ENCODE measurements at regions of chr7 and their contacts with region 1.

Region 1: DNA sequence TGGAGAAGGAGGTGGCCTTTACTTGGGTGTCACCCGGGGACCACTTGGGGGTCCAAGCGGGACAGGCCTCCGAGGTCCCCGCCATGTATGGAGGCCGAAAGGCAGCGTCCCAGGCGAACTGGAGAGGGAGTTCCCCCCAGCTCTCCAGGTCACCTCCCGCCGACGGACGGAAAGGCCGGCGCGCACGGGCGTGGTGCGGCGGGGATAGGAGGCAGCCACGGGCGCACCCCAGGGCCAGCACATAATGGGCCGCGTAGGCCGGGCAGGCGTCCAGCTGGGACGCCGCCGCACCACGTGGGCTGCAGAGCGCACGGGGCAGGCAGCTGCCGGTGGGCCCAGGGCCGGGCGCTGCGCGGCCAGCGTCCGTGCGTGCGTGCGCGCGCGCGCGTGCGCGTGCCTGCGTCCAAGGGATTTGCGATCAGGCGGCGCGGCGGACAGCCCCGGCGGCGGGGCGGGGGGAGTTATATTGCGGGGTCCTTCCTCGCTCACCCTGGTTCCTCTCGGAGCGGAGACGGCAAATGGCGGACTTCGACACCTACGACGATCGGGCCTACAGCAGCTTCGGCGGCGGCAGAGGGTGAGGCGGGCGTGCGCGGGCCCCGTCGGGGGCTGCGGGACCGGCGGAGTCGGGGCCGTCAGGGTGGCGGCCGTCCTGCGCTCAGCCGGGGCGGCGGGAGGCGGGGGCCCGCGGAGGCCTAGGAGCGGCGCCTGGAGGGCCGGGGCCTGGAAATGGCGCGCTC is at the start of gene EIF4H:
- DNase-seq: peak; percentile 96 to 99 (median 98)
- ATAC-seq: peak; percentile 97 to 98 (median 98)
- H3K4me3 ChIP-seq: peak within 1 kb of the TSS; percentile 82 to 99 (median 96)
- H3K27ac ChIP-seq: peak within 1 kb of the TSS; percentile 90 to 98 (median 96)
- H3K4me1 ChIP-seq: peaks cover 4 to 57% (median 42%) of the 10 kb centered on the region in 12 donors
- H3K27me3 ChIP-seq: no peaks in the 10 kb centered on the region
- CTCF ChIP-seq: peak in 1 of 12 donors; percentile 7
- POLR2A ChIP-seq: peak; percentile 27 to 69
- total RNA-seq, gene EIF4H: 166 to 216 (median 196) TPM

Region 2: GRCh38 chr7:74083117-74083876 is 90.7 kb before region 1 on chr7 and contains the start of gene LIMK1:
- intact Hi-C with region 1: loop called in 3 of 10 experiments (anchors 5 to 10 kb)
- DNase-seq: peak; percentile 76 to 93 (median 84)
- ATAC-seq: peak; percentile 75 to 94 (median 92)
- H3K4me3 ChIP-seq: peak within 1 kb of the TSS; percentile 50 to 89 (median 75)
- H3K27ac ChIP-seq: peak within 1 kb of the TSS in 5 of 12 donors; percentile 35 to 60 (median 57)
- H3K4me1 ChIP-seq: peaks cover 0 to 27% (median 14%) of the 10 kb centered on the region in 12 donors
- H3K27me3 ChIP-seq: no peaks in the 10 kb centered on the region
- CTCF ChIP-seq: no peak
- POLR2A ChIP-seq: no peak
- total RNA-seq, gene LIMK1: 9.3 to 23.2 (median 11.6) TPM

Region 3: GRCh38 chr7:74094224-74095101 is 79.6 kb before region 1 on chr7:
- intact Hi-C with region 1: loop called in 5 of 10 experiments (anchors 2 to 10 kb)
- DNase-seq: peak; percentile 66 to 88 (median 86)
- ATAC-seq: peak; percentile 7 to 84 (median 78)
- H3K4me3 ChIP-seq: peak overlapping the region; percentile 23 to 67 (median 46)
- H3K27ac ChIP-seq: peak overlapping the region; percentile 3 to 91 (median 68)
- H3K4me1 ChIP-seq: peaks cover 2 to 35% (median 29%) of the 10 kb centered on the region in 12 donors
- H3K27me3 ChIP-seq: no peaks in the 10 kb centered on the region
- CTCF ChIP-seq: no peak
- POLR2A ChIP-seq: no peak